PC-9 (cell line): ENCODE measurements at regions of chr1 and their contacts with region 1.

Region 1: GRCh38 chr1:44594871-44595746 is 79.2 kb downstream of the TMEM53 start:
- DNase-seq: peak; percentile 55 to 84
- H3K4me3 ChIP-seq: no peak overlapping the region
- H3K27ac ChIP-seq: no peak overlapping the region
- H3K4me1 ChIP-seq: no peaks in the 10 kb centered on the region
- H3K27me3 ChIP-seq: peaks cover 4% of the 10 kb centered on the region
- CTCF ChIP-seq: peak; percentile 98

Region 2: GRCh38 chr1:44084998-44085675 is 510.0 kb before region 1 on chr1:
- CTCF ChIA-PET with region 1: no interaction called
- POLR2A ChIA-PET with region 1: no interaction called
- intact Hi-C with region 1: loop called (anchors 10 kb)
- DNase-seq: peak; percentile 26 to 79
- H3K4me3 ChIP-seq: no peak overlapping the region
- H3K27ac ChIP-seq: no peak overlapping the region
- H3K4me1 ChIP-seq: peaks cover 7% of the 10 kb centered on the region; the same call in 1 of the 2 replicates
- H3K27me3 ChIP-seq: no peaks in the 10 kb centered on the region
- CTCF ChIP-seq: no peak

Region 3: GRCh38 chr1:44327679-44328491 is 267.2 kb before region 1 on chr1:
- CTCF ChIA-PET with region 1: no interaction called
- POLR2A ChIA-PET with region 1: no interaction called
- intact Hi-C with region 1: loop called (anchors 5 kb)
- DNase-seq: peak; percentile 99
- H3K4me3 ChIP-seq: no peak overlapping the region
- H3K27ac ChIP-seq: peak overlapping the region; percentile 72
- H3K4me1 ChIP-seq: peaks cover 45% of the 10 kb centered on the region
- H3K27me3 ChIP-seq: no peaks in the 10 kb centered on the region
- CTCF ChIP-seq: no peak

Region 4: DNA sequence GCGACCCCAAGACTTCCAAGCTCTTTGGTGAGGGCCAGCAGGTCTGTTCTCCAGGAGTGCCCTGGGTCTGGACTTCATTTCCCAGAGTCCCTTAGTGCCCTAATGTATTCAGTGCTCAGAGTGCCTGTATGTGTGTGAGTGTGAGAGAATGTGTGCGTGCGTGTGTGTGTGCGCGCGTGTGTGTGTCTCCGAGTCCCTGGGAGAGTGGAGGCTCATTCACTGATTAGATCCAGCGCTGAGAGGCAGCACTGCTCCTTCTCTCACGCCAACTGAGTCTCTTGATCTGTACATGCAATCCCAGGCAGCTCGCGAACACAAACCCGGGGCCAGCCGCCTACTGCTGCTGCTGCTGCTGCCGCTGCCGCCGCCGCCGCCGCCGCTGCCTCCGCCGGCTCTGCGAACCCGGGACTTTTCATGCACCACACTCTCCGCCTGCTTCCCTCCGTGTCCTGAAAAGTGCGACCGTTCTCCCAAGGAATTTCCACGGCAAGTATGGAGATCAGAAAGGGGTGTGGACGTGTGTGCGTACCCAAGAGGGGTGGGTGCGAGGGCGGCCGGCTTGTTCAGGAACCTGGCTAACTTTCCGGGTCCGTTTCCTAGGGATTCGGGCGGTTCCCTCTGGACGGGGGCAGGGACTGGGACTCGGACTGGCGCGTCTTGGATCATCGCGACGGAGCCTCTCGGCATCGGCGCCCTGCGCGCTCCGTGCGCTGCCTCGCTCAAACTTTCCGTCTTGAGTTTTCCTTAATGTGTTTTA is 189.9 kb before region 1 on chr1 and contains the start of gene RNF220:
- CTCF ChIA-PET with region 1: interaction called, 3 read pairs
- POLR2A ChIA-PET with region 1: no interaction called
- intact Hi-C with region 1: loop called (anchors 10 kb)
- DNase-seq: peak; percentile 46 to 61
- H3K4me3 ChIP-seq: peak within 1 kb of the TSS; percentile 68
- H3K27ac ChIP-seq: no peak within 1 kb of the TSS
- H3K4me1 ChIP-seq: no peaks in the 10 kb centered on the region; the same call in 1 of the 2 replicates
- H3K27me3 ChIP-seq: no peaks in the 10 kb centered on the region
- CTCF ChIP-seq: no peak
- total RNA-seq, gene RNF220: 82.9 and 86.3 TPM in 2 replicates

Region 5: GRCh38 chr1:44652445-44653106 is 57.5 kb after region 1 on chr1:
- CTCF ChIA-PET with region 1: interaction called, 3 read pairs
- POLR2A ChIA-PET with region 1: no interaction called
- intact Hi-C with region 1: loop called (anchors 1 kb)
- DNase-seq: peak; percentile 50 to 79
- H3K4me3 ChIP-seq: no peak overlapping the region
- H3K27ac ChIP-seq: no peak overlapping the region
- H3K4me1 ChIP-seq: no peaks in the 10 kb centered on the region
- H3K27me3 ChIP-seq: no peaks in the 10 kb centered on the region
- CTCF ChIP-seq: peak; percentile 95